Common myeloid progenitor, CD34-positive (primary cell): ENCODE measurements at regions of chr1 and their contacts with region 1.

Region 1: DNA sequence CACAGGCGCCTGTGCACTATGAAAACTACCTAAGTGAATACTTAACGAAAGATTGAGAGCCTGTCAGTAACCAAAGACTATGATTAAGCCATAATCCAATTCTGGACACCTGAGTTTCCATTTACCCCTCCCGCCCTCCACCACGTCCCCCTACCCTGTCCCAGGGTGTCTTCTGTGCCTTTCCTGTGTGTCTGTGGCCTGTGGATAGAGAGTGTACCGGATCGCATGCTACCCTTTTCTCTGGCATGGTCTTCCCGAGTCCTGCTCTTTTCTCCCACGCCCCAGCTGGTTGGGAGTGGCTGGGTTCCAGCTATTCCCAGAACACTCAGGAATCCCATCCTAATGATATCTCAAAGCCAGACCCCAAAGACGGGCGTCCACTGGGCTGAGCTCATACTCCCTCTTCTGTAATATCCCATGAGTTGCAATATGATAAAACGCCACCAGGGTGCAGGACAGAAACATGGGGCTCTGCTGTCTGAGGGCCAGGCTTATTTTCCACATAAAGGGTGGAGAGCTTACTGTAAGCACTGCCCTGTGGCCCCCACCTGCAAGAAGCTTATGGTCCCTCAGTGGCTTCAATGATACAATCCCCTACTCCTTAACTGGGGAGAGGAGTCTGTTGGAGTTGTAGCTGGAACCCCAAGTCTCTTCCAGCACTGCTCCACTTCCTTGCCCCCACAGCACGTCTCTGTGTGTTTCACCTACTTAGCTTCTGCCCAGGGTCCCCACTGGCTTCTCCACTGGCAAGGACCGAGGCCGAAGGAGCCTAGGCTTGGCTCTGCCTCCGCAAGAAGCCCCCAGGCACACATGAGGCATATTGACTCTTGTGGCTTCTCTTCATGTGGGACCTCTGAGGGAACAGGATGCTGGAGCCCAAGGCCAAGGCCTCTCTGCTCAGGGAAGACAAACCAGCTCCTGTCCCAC is 17.6 kb upstream of the ALX3 start:
- DNase-seq: peak; percentile 54 to 74 (median 62)
- H3K4me3 ChIP-seq: no peak overlapping the region
- H3K27ac ChIP-seq: no peak overlapping the region
- H3K4me1 ChIP-seq: peaks cover 0 to 26% (median 20%) of the 10 kb centered on the region in 4 experiments
- H3K27me3 ChIP-seq: peaks cover 7 to 41% (median 26%) of the 10 kb centered on the region in 5 experiments

Region 2: GRCh38 chr1:110067893-110068645 is 20.0 kb before region 1 on chr1:
- CTCF ChIA-PET with region 1: interaction called, 58 read pairs
- POLR2A ChIA-PET with region 1: no interaction called
- DNase-seq: peak in 2 of 3 donors; percentile 40 to 57
- H3K4me3 ChIP-seq: peak overlapping the region in 5 of 7 experiments; percentile 16 to 42 (median 38)
- H3K27ac ChIP-seq: no peak overlapping the region
- H3K4me1 ChIP-seq: peaks cover 0 to 36% (median 22%) of the 10 kb centered on the region in 4 experiments
- H3K27me3 ChIP-seq: peaks cover 4 to 81% (median 51%) of the 10 kb centered on the region in 5 experiments

Region 3: GRCh38 chr1:110097887-110098681 is 10.0 kb after region 1 on chr1:
- CTCF ChIA-PET with region 1: interaction called, 176 read pairs
- POLR2A ChIA-PET with region 1: no interaction called
- DNase-seq: no peak
- H3K4me3 ChIP-seq: no peak overlapping the region
- H3K27ac ChIP-seq: no peak overlapping the region
- H3K4me1 ChIP-seq: peaks cover 0 to 9% (median 2%) of the 10 kb centered on the region in 4 experiments
- H3K27me3 ChIP-seq: peaks cover 0 to 10% (median 0%) of the 10 kb centered on the region in 5 experiments

Region 4: DNA sequence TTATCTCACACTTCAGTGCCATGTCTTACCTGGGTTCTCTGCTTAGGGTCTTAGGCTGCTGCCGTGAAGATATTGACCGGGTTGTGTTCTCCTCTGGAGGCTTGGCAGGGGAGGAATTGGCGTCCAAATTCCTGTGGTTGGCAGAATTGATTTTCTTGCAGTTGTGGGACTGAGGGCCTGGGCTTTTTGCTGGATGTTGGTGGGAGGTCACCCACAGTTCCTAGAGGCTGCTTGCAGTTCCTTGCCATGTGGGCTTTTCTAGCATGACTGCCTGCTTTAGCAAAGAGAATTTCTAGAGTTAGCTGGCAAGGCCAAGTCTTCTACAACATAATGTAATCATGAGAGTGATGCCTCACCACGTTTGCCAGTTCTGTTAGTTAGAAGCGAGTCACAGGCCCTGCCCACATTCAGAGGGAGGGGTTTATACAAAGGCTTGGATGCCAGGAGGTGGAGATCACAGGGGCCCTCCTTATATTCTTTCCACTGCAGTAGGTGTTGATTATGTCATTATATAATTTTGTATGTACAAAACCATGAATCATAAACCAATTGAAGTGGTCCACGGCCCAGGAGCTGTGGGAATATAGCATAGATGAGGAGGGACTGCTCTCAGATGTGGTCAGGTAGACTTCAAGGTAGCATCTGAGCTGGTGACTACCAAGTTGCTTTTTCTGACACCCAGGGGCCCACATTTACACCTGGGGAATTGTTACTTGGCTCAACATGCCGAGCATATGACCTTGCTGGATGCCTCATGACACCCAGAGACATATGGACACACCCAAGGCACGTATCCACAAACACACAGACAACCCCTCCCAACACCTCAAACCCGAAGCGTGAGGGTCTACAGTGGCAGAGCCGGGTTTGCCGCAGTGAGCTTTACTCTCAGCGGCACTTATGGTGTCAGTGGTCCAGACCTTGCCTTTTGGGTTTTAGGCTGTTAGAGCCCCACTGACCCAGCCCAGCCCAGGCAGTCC is 30.9 kb after region 1 on chr1:
- CTCF ChIA-PET with region 1: interaction called, 12 read pairs
- POLR2A ChIA-PET with region 1: no interaction called
- DNase-seq: no peak
- H3K4me3 ChIP-seq: no peak overlapping the region
- H3K27ac ChIP-seq: no peak overlapping the region
- H3K4me1 ChIP-seq: no peaks in the 10 kb centered on the region
- H3K27me3 ChIP-seq: peaks cover 0 to 11% (median 4%) of the 10 kb centered on the region in 5 experiments